ENCODE measurements at regions of chr22 and their contacts with region 1.

Region 1: GRCh38 chr22:40310081-40310767 is 36.1 kb upstream of the ADSL start:
- DNase-seq: no peak
- ATAC-seq: no peak
- H3K4me3 ChIP-seq: no peak overlapping the region
- H3K4me3 Mint-ChIP-seq: no peak overlapping the region
- H3K27ac ChIP-seq: no peak overlapping the region
- H3K27ac Mint-ChIP-seq: peak overlapping the region in 8 of 9 donors; percentile 16 to 86 (median 69)
- H3K4me1 ChIP-seq: peaks cover 0 to 29% of the 10 kb centered on the region in 2 donors
- H3K4me1 Mint-ChIP-seq: peaks cover 24 to 56% (median 49%) of the 10 kb centered on the region in 7 donors
- H3K27me3 ChIP-seq: no peaks in the 10 kb centered on the region
- H3K27me3 Mint-ChIP-seq: no peaks in the 10 kb centered on the region

Region 2: DNA sequence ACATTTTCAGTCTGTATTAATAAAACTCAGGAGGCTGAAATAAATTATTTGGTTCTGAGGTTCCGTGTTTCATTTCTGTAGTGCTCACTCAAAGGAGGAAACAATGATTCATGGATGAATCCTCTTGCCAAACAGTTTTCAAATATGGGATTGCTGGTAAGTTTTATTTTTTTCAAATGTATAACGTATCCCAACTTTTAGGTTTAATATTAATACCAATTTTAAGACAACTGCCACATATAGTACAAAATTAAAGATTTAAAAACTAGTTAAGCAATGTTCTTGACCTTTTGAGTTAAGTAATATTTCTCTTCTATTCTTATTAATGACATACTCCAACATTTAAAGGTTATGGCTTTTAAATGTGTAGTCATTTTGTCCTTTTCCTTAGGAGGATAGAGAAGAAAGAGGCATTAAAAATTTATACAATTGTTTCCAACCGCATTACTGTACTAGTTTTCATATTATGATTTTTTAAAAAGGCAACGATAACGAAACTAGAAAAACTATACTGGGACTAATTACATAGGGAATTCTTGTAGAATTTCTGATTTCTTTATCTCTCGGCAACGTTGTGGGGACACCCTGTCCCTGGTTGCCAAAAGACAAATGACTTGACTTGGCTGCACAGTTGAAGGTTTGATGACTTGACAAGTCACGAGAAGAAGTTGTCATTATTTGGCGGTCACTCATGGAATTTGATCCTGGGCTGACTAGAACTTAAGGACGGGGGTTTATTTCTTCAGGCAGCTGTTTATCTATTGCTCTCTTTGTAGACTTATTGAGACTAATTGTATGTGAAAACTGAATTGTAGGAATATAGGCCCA is 33.0 kb before region 1 on chr22:
- CTCF ChIA-PET with region 1: interaction called, 4 read pairs
- POLR2A ChIA-PET with region 1: no interaction called
- intact Hi-C with region 1: loop called in 1 of 2 experiments (anchors 2 kb)
- DNase-seq: no peak
- ATAC-seq: no peak
- H3K4me3 ChIP-seq: peak overlapping the region; percentile 40
- H3K4me3 Mint-ChIP-seq: peak overlapping the region in 6 of 10 donors; percentile 1 to 88 (median 64)
- H3K27ac ChIP-seq: peak overlapping the region; percentile 82
- H3K27ac Mint-ChIP-seq: peak overlapping the region; percentile 57 to 97 (median 89)
- H3K4me1 ChIP-seq: peaks cover 0 to 35% of the 10 kb centered on the region in 2 donors
- H3K4me1 Mint-ChIP-seq: peaks cover 23 to 89% (median 69%) of the 10 kb centered on the region in 7 donors
- H3K27me3 ChIP-seq: no peaks in the 10 kb centered on the region
- H3K27me3 Mint-ChIP-seq: no peaks in the 10 kb centered on the region

Region 3: GRCh38 chr22:40332319-40332781 is 22.1 kb after region 1 on chr22:
- CTCF ChIA-PET with region 1: no interaction called
- POLR2A ChIA-PET with region 1: interaction called, 4 read pairs
- intact Hi-C with region 1: loop called in 1 of 2 experiments (anchors 2 kb)
- DNase-seq: peak in 7 of 9 donors; percentile 42 to 72 (median 65)
- ATAC-seq: peak; percentile 61
- H3K4me3 ChIP-seq: peak overlapping the region; percentile 26
- H3K4me3 Mint-ChIP-seq: peak overlapping the region; percentile 59 to 84 (median 68)
- H3K27ac ChIP-seq: peak overlapping the region; percentile 65
- H3K27ac Mint-ChIP-seq: peak overlapping the region; percentile 72 to 99 (median 95)
- H3K4me1 ChIP-seq: peaks cover 65 to 87% of the 10 kb centered on the region in 2 donors
- H3K4me1 Mint-ChIP-seq: peaks cover 65 to 99% (median 93%) of the 10 kb centered on the region in 7 donors
- H3K27me3 ChIP-seq: no peaks in the 10 kb centered on the region
- H3K27me3 Mint-ChIP-seq: no peaks in the 10 kb centered on the region

Measured in naive thymus-derived CD4-positive, alpha-beta T cell (primary cell).